PC-3 (cell line): ENCODE measurements at regions of chr3 and their contacts with region 1.

Region 1: GRCh38 chr3:25648107-25648535 is 16.6 kb downstream of the TOP2B start:
- DNase-seq: peak; percentile 95
- ATAC-seq: peak; percentile 95
- H3K4me3 ChIP-seq: no peak overlapping the region
- H3K27ac ChIP-seq: no peak overlapping the region
- H3K4me1 ChIP-seq: no peaks in the 10 kb centered on the region
- H3K27me3 ChIP-seq: no peaks in the 10 kb centered on the region
- CTCF ChIP-seq: peak; percentile 95

Region 2: GRCh38 chr3:25080461-25080860 is 567.7 kb before region 1 on chr3:
- CTCF ChIA-PET with region 1: no interaction called
- POLR2A ChIA-PET with region 1: no interaction called
- intact Hi-C with region 1: no loop called
- DNase-seq: no peak
- ATAC-seq: no peak
- H3K4me3 ChIP-seq: no peak overlapping the region
- H3K27ac ChIP-seq: no peak overlapping the region
- H3K4me1 ChIP-seq: no peaks in the 10 kb centered on the region
- H3K27me3 ChIP-seq: no peaks in the 10 kb centered on the region
- CTCF ChIP-seq: no peak

Region 3: GRCh38 chr3:25178672-25179071 is 469.4 kb before region 1 on chr3:
- CTCF ChIA-PET with region 1: no interaction called
- POLR2A ChIA-PET with region 1: no interaction called
- intact Hi-C with region 1: no loop called
- DNase-seq: no peak
- ATAC-seq: no peak
- H3K4me3 ChIP-seq: no peak overlapping the region
- H3K27ac ChIP-seq: no peak overlapping the region
- H3K4me1 ChIP-seq: no peaks in the 10 kb centered on the region
- H3K27me3 ChIP-seq: peaks cover 26% of the 10 kb centered on the region
- CTCF ChIP-seq: no peak

Region 4: DNA sequence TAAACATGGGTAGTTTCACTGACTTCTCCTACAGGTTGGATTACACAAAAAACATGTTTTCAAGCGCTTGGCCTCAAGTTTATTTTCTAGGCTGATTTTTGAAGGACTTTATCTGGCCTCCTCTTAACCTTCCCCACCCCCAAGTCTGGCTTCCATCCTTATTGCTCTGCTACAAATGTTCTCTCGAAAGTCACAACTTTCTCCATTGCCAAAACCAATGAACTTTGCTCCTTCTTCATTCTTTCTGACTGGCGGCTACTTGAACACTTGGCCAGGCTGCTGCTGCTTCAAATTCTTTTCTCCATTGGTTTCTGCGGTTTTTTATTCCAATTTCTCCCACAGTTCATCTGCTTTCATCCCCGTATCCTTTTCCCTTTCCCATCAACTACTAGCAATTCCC is 90.0 kb before region 1 on chr3:
- CTCF ChIA-PET with region 1: no interaction called
- POLR2A ChIA-PET with region 1: no interaction called
- intact Hi-C with region 1: no loop called
- DNase-seq: no peak
- ATAC-seq: no peak
- H3K4me3 ChIP-seq: no peak overlapping the region
- H3K27ac ChIP-seq: no peak overlapping the region
- H3K4me1 ChIP-seq: no peaks in the 10 kb centered on the region
- H3K27me3 ChIP-seq: peaks cover 52% of the 10 kb centered on the region
- CTCF ChIP-seq: no peak

Region 5: GRCh38 chr3:25664810-25665314 is 16.7 kb after region 1 on chr3 and contains the start of gene TOP2B:
- CTCF ChIA-PET with region 1: no interaction called
- POLR2A ChIA-PET with region 1: no interaction called
- intact Hi-C with region 1: loop called (anchors 2 kb)
- DNase-seq: peak; percentile 97
- ATAC-seq: peak; percentile 93
- H3K4me3 ChIP-seq: peak within 1 kb of the TSS; percentile 86
- H3K27ac ChIP-seq: peak within 1 kb of the TSS; percentile 39
- H3K4me1 ChIP-seq: peaks cover 14% of the 10 kb centered on the region
- H3K27me3 ChIP-seq: no peaks in the 10 kb centered on the region
- CTCF ChIP-seq: no peak
- total RNA-seq, gene TOP2B: 79.0 and 107 TPM in 2 replicates

Region 6: DNA sequence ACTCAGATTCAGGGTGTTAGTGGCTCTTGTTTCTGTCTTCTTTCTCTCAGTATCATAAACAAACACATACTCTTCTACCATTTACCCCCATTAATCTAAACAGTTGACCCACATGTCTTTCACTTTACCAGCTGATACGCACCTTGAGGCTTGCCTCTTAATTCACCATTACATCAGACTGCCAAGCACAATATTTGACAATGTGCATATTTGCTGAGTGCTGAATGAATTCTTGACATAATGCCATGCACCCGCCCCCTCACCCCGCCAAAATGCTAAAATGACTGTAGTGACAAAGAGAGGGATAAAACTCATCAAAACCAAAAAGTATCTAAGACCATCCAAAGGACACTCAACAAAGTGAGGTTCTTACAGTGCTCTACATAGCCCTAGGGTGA is 77.7 kb after region 1 on chr3:
- CTCF ChIA-PET with region 1: no interaction called
- POLR2A ChIA-PET with region 1: no interaction called
- intact Hi-C with region 1: no loop called
- DNase-seq: peak; percentile 27
- ATAC-seq: peak; percentile 31; the same call in 1 of the 2 replicates
- H3K4me3 ChIP-seq: no peak overlapping the region
- H3K27ac ChIP-seq: 0 out of 2 replicates have a peak overlapping the region, but pooled peaks have one; percentile 2
- H3K4me1 ChIP-seq: peaks cover 15% of the 10 kb centered on the region
- H3K27me3 ChIP-seq: no peaks in the 10 kb centered on the region
- CTCF ChIP-seq: no peak

Region 7: GRCh38 chr3:25831578-25831977 is 183.5 kb after region 1 on chr3:
- CTCF ChIA-PET with region 1: interaction called, 7 read pairs
- POLR2A ChIA-PET with region 1: no interaction called
- intact Hi-C with region 1: loop called (anchors 1 kb)
- DNase-seq: peak; percentile 46
- ATAC-seq: peak; percentile 94
- H3K4me3 ChIP-seq: no peak overlapping the region
- H3K27ac ChIP-seq: no peak overlapping the region
- H3K4me1 ChIP-seq: no peaks in the 10 kb centered on the region
- H3K27me3 ChIP-seq: no peaks in the 10 kb centered on the region; the same call in 1 of the 2 replicates
- CTCF ChIP-seq: peak; percentile 53

Region 8: GRCh38 chr3:25843332-25843731 is 195.2 kb after region 1 on chr3:
- CTCF ChIA-PET with region 1: no interaction called
- POLR2A ChIA-PET with region 1: no interaction called
- intact Hi-C with region 1: loop called (anchors 1 kb)
- DNase-seq: peak; percentile 60
- ATAC-seq: peak; percentile 31; the same call in 1 of the 2 replicates
- H3K4me3 ChIP-seq: no peak overlapping the region
- H3K27ac ChIP-seq: no peak overlapping the region
- H3K4me1 ChIP-seq: no peaks in the 10 kb centered on the region
- H3K27me3 ChIP-seq: no peaks in the 10 kb centered on the region
- CTCF ChIP-seq: peak; percentile 61

Region 9: DNA sequence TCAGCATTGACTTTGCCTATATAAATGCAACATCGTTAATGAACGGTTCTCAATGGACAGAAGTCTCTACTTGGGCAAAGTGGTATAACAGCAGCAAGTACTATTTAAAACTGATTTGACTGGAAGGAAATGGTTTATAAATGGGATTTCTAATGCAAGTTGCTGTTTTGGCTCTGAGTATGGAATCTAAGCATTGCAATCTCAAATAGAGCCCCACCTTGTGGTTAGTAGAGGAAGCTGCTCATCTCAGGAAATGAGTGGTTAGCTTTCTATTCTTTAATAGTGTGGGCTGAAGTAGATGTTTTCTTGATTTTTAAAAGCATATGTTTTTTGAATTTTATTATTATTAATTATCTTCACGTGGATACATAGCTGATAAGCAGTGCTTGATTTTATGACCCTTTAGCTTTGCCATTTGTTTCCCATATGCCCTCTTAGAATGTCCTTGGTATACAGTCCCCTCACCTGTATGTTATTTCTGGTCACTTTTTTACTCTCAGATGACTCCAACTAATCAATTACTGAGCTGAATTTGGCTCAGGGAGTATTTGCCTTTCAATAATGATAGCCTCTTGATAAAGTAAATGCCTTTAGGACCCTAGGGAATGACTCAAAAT is 208.9 kb after region 1 on chr3:
- CTCF ChIA-PET with region 1: interaction called, 12 read pairs
- POLR2A ChIA-PET with region 1: no interaction called
- intact Hi-C with region 1: loop called (anchors 1 kb)
- DNase-seq: peak; percentile 68
- ATAC-seq: no peak
- H3K4me3 ChIP-seq: no peak overlapping the region
- H3K27ac ChIP-seq: no peak overlapping the region
- H3K4me1 ChIP-seq: peaks cover 32% of the 10 kb centered on the region
- H3K27me3 ChIP-seq: no peaks in the 10 kb centered on the region
- CTCF ChIP-seq: peak; percentile 87

Region 10: DNA sequence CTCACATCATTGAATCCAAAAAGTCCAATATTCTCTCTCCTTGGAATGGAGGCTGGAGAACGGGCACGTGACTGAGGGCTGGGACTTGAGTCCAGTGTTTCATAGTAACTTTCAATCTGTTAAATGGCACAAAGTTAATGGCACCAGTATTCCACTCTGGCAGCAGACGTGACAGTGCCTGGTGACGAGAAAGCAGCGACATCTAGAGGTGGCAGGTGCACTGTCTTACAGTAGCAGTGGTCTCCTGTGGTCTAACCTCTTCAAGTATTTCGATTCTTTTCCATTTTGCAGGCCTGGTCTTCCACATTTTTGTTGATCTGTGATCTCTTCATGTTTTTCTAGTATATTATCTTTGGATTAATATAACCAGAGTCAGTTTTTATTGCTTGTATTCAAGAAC is 248.9 kb after region 1 on chr3:
- CTCF ChIA-PET with region 1: no interaction called
- POLR2A ChIA-PET with region 1: no interaction called
- intact Hi-C with region 1: loop called (anchors 2 kb)
- DNase-seq: peak; percentile 69
- ATAC-seq: peak; percentile 97
- H3K4me3 ChIP-seq: no peak overlapping the region
- H3K27ac ChIP-seq: no peak overlapping the region
- H3K4me1 ChIP-seq: no peaks in the 10 kb centered on the region
- H3K27me3 ChIP-seq: peaks cover 12% of the 10 kb centered on the region; the same call in 1 of the 2 replicates
- CTCF ChIP-seq: peak; percentile 91

Region 11: GRCh38 chr3:25962249-25962648 is 314.1 kb after region 1 on chr3:
- CTCF ChIA-PET with region 1: interaction called, 5 read pairs
- POLR2A ChIA-PET with region 1: no interaction called
- intact Hi-C with region 1: loop called (anchors 1 kb)
- DNase-seq: peak; percentile 61
- ATAC-seq: peak; percentile 73
- H3K4me3 ChIP-seq: no peak overlapping the region
- H3K27ac ChIP-seq: no peak overlapping the region
- H3K4me1 ChIP-seq: no peaks in the 10 kb centered on the region
- H3K27me3 ChIP-seq: 0 out of 2 replicates have a peak, but pooled peaks cover 4% of the 10 kb centered on the region
- CTCF ChIP-seq: peak; percentile 72